ENCODE measurements at regions of chr2 and their contacts with region 1.

Region 1: GRCh38 chr2:229475778-229476177 is 204.7 kb upstream of the PID1 start:
- DNase-seq: no peak
- H3K4me3 ChIP-seq: no peak overlapping the region
- H3K27ac ChIP-seq: no peak overlapping the region
- H3K4me1 ChIP-seq: no peaks in the 10 kb centered on the region
- H3K27me3 ChIP-seq: no peaks in the 10 kb centered on the region
- CTCF ChIP-seq: no peak
- POLR2A ChIP-seq: no peak

Region 2: DNA sequence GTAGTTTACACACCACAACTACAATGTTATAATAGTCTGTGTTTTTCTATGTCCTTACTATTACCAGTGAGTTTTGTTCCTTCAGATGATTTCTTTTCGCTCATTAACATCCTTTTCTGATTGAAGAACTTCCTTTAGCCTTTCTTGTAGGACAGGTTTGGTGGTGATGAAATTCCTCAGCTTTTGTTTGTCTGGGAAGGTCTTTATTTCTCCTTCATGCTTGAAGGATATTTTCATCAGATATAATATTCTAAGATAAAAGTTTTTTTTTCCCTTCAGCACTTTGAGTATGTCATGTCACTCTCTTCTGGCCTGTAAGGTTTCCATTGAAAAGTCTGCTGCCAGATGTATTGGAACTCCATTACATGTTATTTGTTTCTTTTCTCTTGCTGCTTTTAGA is 631.0 kb after region 1 on chr2:
- intact Hi-C with region 1: loop called (anchors 10 kb)
- DNase-seq: no peak
- H3K4me3 ChIP-seq: no peak overlapping the region
- H3K27ac ChIP-seq: no peak overlapping the region
- H3K4me1 ChIP-seq: no peaks in the 10 kb centered on the region
- H3K27me3 ChIP-seq: no peaks in the 10 kb centered on the region
- CTCF ChIP-seq: no peak
- POLR2A ChIP-seq: no peak